ENCODE measurements at regions of chr17 and their contacts with region 1.

Region 1: GRCh38 chr17:19513897-19514488 is 19.7 kb upstream of the SLC47A1 start:
- DNase-seq: peak; percentile 52 to 71 (median 66)
- ATAC-seq: peak; percentile 84 to 95 (median 92)
- H3K4me3 ChIP-seq: no peak overlapping the region
- H3K27ac ChIP-seq: peak overlapping the region in 1 of 3 donors; percentile 45
- H3K4me1 ChIP-seq: peaks cover 0 to 6% (median 0%) of the 10 kb centered on the region in 4 donors
- H3K27me3 ChIP-seq: no peaks in the 10 kb centered on the region
- CTCF ChIP-seq: peak; percentile 86 to 93 (median 90)
- POLR2A ChIP-seq: no peak

Region 2: DNA sequence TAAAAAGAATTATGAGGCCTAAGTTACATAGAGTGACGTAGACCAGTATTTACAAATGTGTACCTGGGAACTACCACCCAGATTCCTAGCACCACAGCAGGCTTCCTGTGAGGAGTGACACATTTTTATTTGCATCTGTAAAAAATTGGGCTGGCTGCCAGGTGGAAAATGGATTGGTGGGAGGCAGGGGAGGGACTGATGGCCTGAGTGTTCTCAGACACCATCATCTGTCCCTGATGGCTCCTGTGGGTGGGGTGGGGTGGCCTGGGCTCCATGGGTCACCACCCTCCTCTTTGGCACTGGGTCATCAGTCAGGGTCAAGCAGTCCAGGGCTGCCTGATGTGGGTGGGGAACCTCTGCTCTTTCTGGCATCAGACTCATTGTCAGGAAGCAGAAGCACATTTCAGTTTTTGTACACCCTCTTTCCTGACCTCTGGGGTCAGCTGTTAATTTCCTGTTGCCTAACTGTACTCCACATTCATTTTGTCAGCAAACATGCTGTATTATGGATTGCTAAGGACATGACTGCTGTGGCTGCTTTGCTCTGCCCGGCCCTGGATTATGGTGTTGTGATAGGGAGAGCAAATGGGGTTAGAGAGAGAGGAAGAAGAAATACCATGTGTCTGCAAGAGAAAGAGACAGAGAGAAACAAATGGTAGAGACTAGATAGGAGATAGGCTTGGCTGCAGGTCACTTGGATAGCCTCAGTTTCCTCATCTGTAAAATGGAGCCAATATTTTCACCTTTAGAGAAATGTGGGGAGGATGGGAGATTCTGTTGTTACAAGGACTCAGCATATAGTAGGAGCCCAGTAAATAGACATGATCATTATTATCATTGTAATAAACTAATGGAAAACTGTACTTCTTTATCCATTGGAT is 115.5 kb before region 1 on chr17:
- intact Hi-C with region 1: no loop called
- DNase-seq: peak in 2 of 3 donors; percentile 53 to 60
- ATAC-seq: peak; percentile 79 to 87 (median 85)
- H3K4me3 ChIP-seq: no peak overlapping the region
- H3K27ac ChIP-seq: peak overlapping the region; percentile 6 to 49 (median 27)
- H3K4me1 ChIP-seq: peaks cover 0 to 9% (median 0%) of the 10 kb centered on the region in 4 donors
- H3K27me3 ChIP-seq: no peaks in the 10 kb centered on the region
- CTCF ChIP-seq: no peak
- POLR2A ChIP-seq: no peak

Region 3: GRCh38 chr17:19447085-19447583 is 66.9 kb before region 1 on chr17:
- intact Hi-C with region 1: no loop called
- DNase-seq: peak in 1 of 3 donors; percentile 65
- ATAC-seq: peak; percentile 79 to 90 (median 84)
- H3K4me3 ChIP-seq: no peak overlapping the region
- H3K27ac ChIP-seq: peak overlapping the region in 1 of 3 donors; percentile 52
- H3K4me1 ChIP-seq: no peaks in the 10 kb centered on the region
- H3K27me3 ChIP-seq: no peaks in the 10 kb centered on the region
- CTCF ChIP-seq: peak; percentile 91 to 98 (median 94)
- POLR2A ChIP-seq: no peak

Region 4: GRCh38 chr17:19596869-19597268 is 82.9 kb after region 1 on chr17:
- intact Hi-C with region 1: no loop called
- DNase-seq: no peak
- ATAC-seq: no peak
- H3K4me3 ChIP-seq: no peak overlapping the region
- H3K27ac ChIP-seq: no peak overlapping the region
- H3K4me1 ChIP-seq: no peaks in the 10 kb centered on the region
- H3K27me3 ChIP-seq: no peaks in the 10 kb centered on the region
- CTCF ChIP-seq: no peak
- POLR2A ChIP-seq: no peak

Region 5: DNA sequence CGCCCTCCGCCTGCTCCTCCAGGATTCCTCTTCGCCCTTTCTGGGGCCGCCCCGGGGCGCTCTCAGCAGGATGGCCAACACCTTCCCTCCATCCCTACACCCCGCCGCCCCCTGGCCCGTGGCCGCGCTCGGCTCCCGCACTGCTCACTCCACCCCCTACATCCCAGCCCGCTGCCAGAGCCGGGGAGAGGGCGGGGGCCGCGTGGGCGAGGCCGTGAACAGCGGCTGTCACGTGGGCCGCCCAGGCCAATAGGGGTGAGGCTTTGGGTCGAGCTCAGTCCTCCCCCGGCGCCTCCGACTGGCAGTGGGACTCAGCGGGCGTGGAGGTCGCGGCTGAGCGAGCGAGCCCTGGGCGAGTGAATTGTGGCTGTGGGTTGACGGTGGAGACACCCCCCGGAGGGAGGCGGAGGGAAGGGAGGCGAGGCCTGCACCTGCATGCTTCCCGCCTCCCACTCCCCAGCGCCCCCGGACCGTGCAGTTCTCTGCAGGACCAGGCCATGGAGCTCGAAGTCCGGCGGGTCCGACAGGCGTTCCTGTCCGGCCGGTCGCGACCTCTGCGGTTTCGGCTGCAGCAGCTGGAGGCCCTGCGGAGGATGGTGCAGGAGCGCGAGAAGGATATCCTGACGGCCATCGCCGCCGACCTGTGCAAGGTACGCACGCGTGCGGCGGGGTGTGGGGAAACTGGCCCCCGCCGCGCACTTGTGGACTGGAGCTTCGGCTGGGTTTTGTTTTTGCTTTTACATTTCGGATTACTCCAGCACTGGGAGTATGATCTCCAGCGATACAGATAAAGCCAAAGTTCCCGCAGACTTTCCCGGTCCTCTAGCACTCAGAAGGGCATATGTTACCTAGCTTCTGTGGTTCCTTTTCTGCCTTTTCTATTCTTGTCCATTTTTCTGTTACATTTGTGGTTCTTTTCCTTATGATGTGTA is 134.7 kb after region 1 on chr17 and contains the start of gene ALDH3A2:
- intact Hi-C with region 1: loop called in 1 of 2 experiments (anchors 10 kb)
- DNase-seq: peak; percentile 99
- ATAC-seq: peak; percentile 81 to 93 (median 85)
- H3K4me3 ChIP-seq: peak within 1 kb of the TSS; percentile 59 to 76 (median 68)
- H3K27ac ChIP-seq: peak within 1 kb of the TSS; percentile 90 to 97 (median 96)
- H3K4me1 ChIP-seq: peaks cover 0 to 45% (median 16%) of the 10 kb centered on the region in 4 donors
- H3K27me3 ChIP-seq: no peaks in the 10 kb centered on the region
- CTCF ChIP-seq: peak in 3 of 4 donors; percentile 5 to 40 (median 23)
- POLR2A ChIP-seq: peak; percentile 95
- total RNA-seq, gene ALDH3A2: 102 to 264 (median 182) TPM

Region 6: GRCh38 chr17:19686400-19687090 is 172.6 kb after region 1 on chr17:
- intact Hi-C with region 1: no loop called
- DNase-seq: no peak
- ATAC-seq: peak; percentile 69 to 87 (median 84)
- H3K4me3 ChIP-seq: no peak overlapping the region
- H3K27ac ChIP-seq: peak overlapping the region in 1 of 3 donors; percentile 36
- H3K4me1 ChIP-seq: peaks cover 0 to 18% (median 6%) of the 10 kb centered on the region in 4 donors
- H3K27me3 ChIP-seq: no peaks in the 10 kb centered on the region
- CTCF ChIP-seq: no peak
- POLR2A ChIP-seq: no peak

Region 7: GRCh38 chr17:19766422-19767270 is 252.7 kb after region 1 on chr17:
- intact Hi-C with region 1: loop called (anchors 5 to 10 kb)
- DNase-seq: peak; percentile 81 to 84 (median 82)
- ATAC-seq: peak; percentile 93 to 97 (median 94)
- H3K4me3 ChIP-seq: no peak overlapping the region
- H3K27ac ChIP-seq: peak overlapping the region in 1 of 3 donors; percentile 35
- H3K4me1 ChIP-seq: peaks cover 0 to 6% (median 2%) of the 10 kb centered on the region in 4 donors
- H3K27me3 ChIP-seq: no peaks in the 10 kb centered on the region
- CTCF ChIP-seq: peak; percentile 91 to 99 (median 97)
- POLR2A ChIP-seq: no peak